ENCODE measurements at regions of chr7 and their contacts with region 1.

Region 1: GRCh38 chr7:44240983-44241510 is 40.3 kb downstream of the YKT6 start:
- DNase-seq: peak; percentile 79
- ATAC-seq: peak; percentile 89

Region 2: DNA sequence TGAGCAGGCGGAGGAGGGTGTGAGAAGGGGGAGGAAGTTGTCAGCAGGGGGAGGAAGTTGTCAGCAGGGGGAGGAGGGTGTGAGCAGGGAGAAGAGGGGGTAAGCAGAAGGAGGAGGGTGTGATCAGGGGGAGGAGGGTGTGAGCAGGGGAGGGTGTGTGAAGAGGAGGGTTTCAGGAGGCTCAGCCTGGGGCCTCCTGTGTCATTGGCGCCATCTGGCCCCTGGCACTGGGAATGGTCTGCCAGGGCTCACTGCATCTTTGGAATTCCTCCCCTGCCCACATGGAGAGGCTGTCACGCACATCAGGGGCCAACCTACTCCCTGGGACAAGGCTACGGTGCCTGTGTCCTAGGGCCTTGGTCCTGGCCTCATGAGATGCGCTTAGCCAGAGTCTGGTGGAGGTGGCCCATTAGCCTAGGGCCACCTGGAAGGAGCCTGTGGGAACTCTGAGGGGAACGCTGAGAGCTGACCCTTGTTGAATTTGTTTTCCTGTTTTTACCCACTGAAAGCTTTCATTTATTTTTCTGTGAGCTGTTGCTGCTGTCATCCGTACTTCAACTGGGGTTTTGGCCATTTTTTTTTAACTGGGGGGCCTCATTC is 66.4 kb after region 1 on chr7:
- intact Hi-C with region 1: loop called (anchors 5 kb)
- DNase-seq: no peak
- ATAC-seq: peak; percentile 65

Region 3: GRCh38 chr7:44477063-44477830 is 236.2 kb after region 1 on chr7:
- intact Hi-C with region 1: loop called (anchors 2 kb)
- DNase-seq: peak; percentile 55
- ATAC-seq: peak; percentile 88

Measured in Right ventricle myocardium superior (tissue), 1 donor.